Activated T-helper 2 cell treated with anti-CD3 and anti-CD28 coated beads, Interferon-gamma antibody, Interleukin-2, Interleukin-4, amounts not matched to agents 10 μg/mL and 5 μg/mL and 100 μg/mL, durations not matched to agents 14 hours and 24 hours and 36 hours (primary cell): ENCODE measurements at regions of chr3 and their contacts with region 1.

Region 1: GRCh38 chr3:63967675-63968611 is 55.4 kb downstream of the PSMD6 start:
- DNase-seq: peak; percentile 33
- H3K4me3 Mint-ChIP-seq: peak overlapping the region; percentile 81
- H3K27ac Mint-ChIP-seq: peak overlapping the region; percentile 93
- H3K4me1 Mint-ChIP-seq: peaks cover 84% of the 10 kb centered on the region
- H3K27me3 Mint-ChIP-seq: no peaks in the 10 kb centered on the region

Region 2: DNA sequence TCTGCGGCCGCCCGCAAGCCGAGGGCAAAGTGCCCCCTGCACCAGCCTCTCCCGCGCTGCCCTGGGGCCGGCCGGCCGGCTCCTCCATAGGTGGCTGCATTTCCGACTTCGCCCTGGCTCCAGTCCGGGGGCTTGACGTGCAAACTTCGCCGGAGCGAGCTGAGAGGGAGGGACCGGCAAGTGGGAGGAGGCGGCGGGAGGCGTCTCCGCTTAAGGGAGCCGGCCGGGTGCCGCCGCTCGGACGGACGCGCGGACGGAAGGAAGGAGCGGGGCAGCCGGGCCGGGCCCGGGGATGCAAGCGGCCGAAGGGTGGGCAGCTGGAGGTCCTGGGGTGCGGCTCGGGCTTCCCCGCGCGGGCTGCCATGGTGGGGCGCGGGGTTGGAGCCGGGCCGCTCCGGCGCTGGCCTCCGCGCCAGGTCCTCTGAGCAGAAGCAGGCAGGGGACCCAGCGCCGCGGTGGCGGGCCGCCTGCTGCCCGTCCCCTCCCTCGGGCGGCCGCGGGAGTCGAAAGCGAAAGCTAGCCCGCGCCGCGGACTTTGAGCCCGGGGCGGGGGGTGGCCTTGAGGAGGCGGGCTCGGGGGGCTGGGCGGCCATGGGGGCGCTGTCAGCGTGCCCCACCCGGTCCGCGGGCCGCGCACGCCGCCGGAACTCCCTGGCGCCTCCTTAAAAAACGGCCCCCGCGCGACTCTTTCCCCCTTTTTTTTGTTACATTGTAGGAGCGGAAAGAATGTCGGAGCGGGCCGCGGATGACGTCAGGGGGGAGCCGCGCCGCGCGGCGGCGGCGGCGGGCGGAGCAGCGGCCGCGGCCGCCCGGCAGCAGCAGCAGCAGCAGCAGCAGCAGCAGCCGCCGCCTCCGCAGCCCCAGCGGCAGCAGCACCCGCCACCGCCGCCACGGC is 55.8 kb before region 1 on chr3 and contains the start of gene SCAANT1:
- intact Hi-C with region 1: loop called (anchors 2 kb)
- DNase-seq: peak; percentile 81
- H3K4me3 Mint-ChIP-seq: peak within 1 kb of the TSS; percentile 94
- H3K27ac Mint-ChIP-seq: peak within 1 kb of the TSS; percentile 97
- H3K4me1 Mint-ChIP-seq: peaks cover 33% of the 10 kb centered on the region
- H3K27me3 Mint-ChIP-seq: no peaks in the 10 kb centered on the region
- total RNA-seq, gene SCAANT1: 1.8 TPM in 1 of 2 replicates, not detected in the other

Region 3: GRCh38 chr3:63979093-63979885 is 11.3 kb after region 1 on chr3:
- intact Hi-C with region 1: loop called (anchors 1 kb)
- DNase-seq: no peak
- H3K4me3 Mint-ChIP-seq: peak overlapping the region; percentile 69
- H3K27ac Mint-ChIP-seq: peak overlapping the region; percentile 83
- H3K4me1 Mint-ChIP-seq: peaks cover 69% of the 10 kb centered on the region
- H3K27me3 Mint-ChIP-seq: no peaks in the 10 kb centered on the region

Region 4: GRCh38 chr3:63990204-63990603 is 22.3 kb after region 1 on chr3:
- intact Hi-C with region 1: no loop called
- DNase-seq: no peak
- H3K4me3 Mint-ChIP-seq: no peak overlapping the region
- H3K27ac Mint-ChIP-seq: no peak overlapping the region
- H3K4me1 Mint-ChIP-seq: peaks cover 8% of the 10 kb centered on the region
- H3K27me3 Mint-ChIP-seq: no peaks in the 10 kb centered on the region

Region 5: DNA sequence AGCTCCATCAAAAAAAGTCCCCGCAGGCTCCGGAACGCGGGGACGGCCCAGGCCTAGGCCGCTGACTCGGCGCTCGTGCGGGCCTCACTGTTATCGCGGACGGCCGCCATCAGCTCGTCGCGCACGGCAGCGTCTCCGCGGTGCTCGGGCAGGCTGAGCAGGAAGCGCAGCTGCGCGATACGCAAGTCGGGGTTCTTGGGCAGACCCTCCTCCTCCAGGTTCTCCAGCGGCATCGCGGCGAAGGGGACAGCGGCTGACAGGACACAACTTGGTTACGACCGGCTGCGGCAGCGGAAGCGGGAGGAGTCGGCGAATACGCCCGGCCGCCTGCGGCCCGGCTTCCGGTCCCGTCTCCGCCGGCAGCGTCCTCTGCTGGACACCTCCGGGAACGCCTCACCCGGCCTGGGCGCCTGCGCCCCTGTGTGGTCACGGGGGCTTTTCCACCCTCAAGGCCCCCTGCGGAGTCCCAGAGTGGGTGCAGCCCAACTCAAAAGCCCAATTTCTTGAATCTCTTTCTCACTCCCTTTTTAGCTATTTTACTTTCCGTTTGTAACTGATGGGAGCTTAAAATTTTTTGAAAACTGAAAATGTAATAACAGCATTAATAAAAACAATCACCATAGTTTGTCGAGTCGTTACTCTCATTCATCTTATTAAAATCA is 55.4 kb after region 1 on chr3 and contains the start of gene PSMD6:
- intact Hi-C with region 1: loop called (anchors 2 kb)
- DNase-seq: peak; percentile 91
- H3K4me3 Mint-ChIP-seq: peak within 1 kb of the TSS; percentile 83
- H3K27ac Mint-ChIP-seq: peak within 1 kb of the TSS; percentile 56
- H3K4me1 Mint-ChIP-seq: peaks cover 24% of the 10 kb centered on the region
- H3K27me3 Mint-ChIP-seq: peaks cover 14% of the 10 kb centered on the region
- total RNA-seq, gene PSMD6: 125 and 131 TPM in 2 replicates